ENCODE measurements at regions of chr14 and their contacts with region 1.

Region 1: DNA sequence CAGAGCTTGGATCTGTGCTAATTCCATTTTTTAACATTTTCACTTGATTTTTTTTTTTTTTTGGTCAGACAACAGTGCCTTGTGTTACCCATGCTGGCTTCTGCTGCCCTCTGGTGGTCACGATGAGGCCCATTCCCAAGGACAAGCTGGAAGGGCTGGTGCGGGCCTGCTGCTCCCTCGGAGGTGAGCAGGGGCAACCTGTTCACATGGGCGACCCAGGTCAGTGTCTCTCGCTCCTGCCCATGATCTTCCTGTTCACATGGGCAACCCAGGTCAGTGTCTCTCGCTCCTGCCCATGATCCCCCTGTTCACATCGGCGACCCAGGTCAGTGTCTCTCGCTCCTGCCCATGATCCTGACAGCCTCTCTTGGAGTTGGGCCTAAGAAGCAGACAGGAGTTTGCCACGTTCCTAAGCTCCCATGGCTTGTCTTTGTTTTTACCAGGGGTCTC is 59.4 kb downstream of the DGLUCY start:
- DNase-seq: peak; percentile 84 to 87
- H3K4me3 ChIP-seq: no peak overlapping the region
- H3K27ac ChIP-seq: no peak overlapping the region
- H3K4me1 ChIP-seq: peaks cover 0 to 29% (median 21%) of the 10 kb centered on the region in 4 donors
- H3K27me3 ChIP-seq: no peaks in the 10 kb centered on the region
- CTCF ChIP-seq: peak; percentile 80 to 91

Region 2: DNA sequence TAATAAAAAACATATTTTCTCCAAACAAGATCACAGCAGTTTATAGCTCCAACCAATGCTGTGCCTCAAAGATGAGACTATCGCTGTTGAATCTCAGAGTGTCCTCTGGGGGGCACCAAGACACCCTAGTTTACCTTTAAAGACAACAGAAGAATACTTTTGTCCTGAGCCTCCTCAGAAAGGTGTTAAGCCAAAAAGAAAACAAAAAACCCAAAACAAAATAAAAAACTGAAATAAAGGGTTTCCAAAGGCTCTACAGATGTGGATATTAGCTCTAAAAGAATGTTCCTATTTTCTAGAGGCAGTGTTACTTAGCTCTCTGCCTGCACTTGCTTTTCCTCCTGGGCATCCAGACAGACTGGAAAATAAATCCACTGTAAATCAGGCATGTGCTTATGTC is 270.1 kb before region 1 on chr14:
- intact Hi-C with region 1: loop called (anchors 2 kb)
- DNase-seq: peak in 1 of 2 donors; percentile 51
- H3K4me3 ChIP-seq: no peak overlapping the region
- H3K27ac ChIP-seq: no peak overlapping the region
- H3K4me1 ChIP-seq: no peaks in the 10 kb centered on the region
- H3K27me3 ChIP-seq: no peaks in the 10 kb centered on the region
- CTCF ChIP-seq: peak; percentile 65 to 75

Region 3: DNA sequence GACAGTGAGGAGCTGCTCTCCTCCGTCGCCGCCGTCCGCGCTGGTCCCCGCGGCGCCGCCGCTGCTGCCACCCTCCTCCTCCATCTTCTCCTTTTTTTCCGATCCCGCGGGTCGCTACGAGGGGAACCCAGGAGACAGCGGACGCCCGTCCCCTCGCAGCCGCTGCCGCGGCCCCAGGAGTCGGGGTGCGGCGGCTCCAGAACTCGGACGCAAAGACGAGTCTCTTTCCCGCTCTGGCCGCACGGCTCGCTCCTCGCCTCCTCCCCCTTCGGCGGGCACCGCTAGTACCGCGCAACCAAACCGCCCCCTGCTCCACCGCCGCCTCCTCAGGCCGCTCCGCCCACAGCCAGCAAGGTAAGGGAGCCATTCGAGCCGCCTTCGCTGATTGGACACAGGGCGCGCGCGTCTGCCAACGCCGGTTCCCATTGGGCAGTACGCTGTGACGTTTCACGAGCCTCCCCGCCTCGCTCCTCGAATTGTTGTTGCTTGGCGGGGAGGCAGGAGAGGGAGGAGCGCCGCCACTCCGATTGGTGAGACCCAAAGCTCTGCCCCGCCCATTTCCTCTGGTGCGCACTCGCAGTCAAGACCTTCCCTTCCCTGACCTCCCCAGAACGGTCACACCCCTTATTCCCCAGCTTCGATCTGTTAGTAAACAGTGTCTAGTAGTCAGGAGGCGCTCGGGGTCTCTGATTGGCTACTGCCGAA is 112.7 kb before region 1 on chr14 and contains the start of gene RPS6KA5:
- intact Hi-C with region 1: loop called (anchors 2 kb)
- DNase-seq: peak; percentile 100
- H3K4me3 ChIP-seq: peak within 1 kb of the TSS; percentile 77 to 81
- H3K27ac ChIP-seq: peak within 1 kb of the TSS; percentile 95 to 96
- H3K4me1 ChIP-seq: peaks cover 0 to 13% (median 5%) of the 10 kb centered on the region in 4 donors
- H3K27me3 ChIP-seq: no peaks in the 10 kb centered on the region
- CTCF ChIP-seq: peak; percentile 13 to 44

Region 4: DNA sequence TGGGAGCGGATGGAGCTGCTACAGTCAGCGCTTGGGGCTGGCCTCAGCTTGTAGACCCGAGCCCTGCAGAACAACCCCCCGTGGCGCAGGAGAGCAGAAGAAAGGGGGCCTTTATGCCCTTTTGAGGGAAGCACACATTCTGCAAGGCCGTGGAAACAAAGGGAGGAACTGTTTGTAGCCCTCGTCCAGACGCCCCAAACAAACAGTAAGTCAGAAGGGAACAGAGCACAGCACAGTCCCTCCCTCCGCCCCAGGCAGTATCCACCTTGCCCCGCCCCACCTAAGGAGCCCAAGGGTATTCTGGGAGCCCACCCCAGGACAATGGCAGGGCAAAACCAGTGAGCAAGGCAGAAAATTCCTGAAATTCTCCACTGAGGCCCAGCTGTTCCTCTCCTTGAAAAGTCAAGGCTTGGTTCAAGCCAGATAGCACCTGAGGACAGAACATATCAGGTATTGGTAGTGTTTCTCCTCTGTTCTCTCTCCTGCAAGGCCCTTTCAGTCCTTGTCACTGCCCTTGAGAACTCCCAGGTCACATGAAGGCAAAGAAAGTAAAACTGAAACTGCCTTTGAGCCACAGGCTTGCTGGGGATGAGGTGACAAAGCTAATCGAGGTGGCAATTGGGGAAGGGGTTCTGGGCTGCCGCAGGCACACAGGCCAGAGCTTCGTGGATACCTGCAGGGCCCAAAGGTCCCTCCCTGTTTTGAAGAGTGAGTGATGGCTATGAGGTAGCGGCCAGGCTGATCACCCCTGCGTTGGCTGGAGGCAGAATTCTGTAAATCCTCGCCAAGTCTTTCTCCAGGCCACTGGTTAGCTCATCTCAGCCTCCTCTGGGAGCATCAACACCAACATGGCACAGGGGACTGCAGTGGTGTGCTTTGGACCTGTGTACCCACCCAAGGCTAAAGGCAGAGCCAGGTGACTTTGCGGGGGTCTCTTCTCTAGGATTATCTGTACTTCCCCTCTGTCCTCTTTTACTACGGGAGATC is 58.9 kb before region 1 on chr14:
- intact Hi-C with region 1: loop called (anchors 2 kb)
- DNase-seq: peak; percentile 51 to 86
- H3K4me3 ChIP-seq: peak overlapping the region; percentile 60 to 68
- H3K27ac ChIP-seq: peak overlapping the region; percentile 76 to 82
- H3K4me1 ChIP-seq: peaks cover 0 to 44% (median 28%) of the 10 kb centered on the region in 4 donors
- H3K27me3 ChIP-seq: no peaks in the 10 kb centered on the region
- CTCF ChIP-seq: no peak

Region 5: GRCh38 chr14:91854327-91854934 is 681.2 kb after region 1 on chr14:
- intact Hi-C with region 1: no loop called
- DNase-seq: no peak
- H3K4me3 ChIP-seq: no peak overlapping the region
- H3K27ac ChIP-seq: peak overlapping the region; percentile 48 to 52
- H3K4me1 ChIP-seq: peaks cover 0 to 43% (median 4%) of the 10 kb centered on the region in 4 donors
- H3K27me3 ChIP-seq: no peaks in the 10 kb centered on the region
- CTCF ChIP-seq: no peak